Astrocyte of the cerebellum (primary cell): ENCODE measurements at regions of chr7 and their contacts with region 1.

Region 1: GRCh38 chr7:44196450-44196872 is 4.3 kb upstream of the YKT6 start:
- DNase-seq: peak; percentile 24
- H3K4me3 ChIP-seq: no peak overlapping the region
- CTCF ChIP-seq: peak; percentile 91

Region 2: DNA sequence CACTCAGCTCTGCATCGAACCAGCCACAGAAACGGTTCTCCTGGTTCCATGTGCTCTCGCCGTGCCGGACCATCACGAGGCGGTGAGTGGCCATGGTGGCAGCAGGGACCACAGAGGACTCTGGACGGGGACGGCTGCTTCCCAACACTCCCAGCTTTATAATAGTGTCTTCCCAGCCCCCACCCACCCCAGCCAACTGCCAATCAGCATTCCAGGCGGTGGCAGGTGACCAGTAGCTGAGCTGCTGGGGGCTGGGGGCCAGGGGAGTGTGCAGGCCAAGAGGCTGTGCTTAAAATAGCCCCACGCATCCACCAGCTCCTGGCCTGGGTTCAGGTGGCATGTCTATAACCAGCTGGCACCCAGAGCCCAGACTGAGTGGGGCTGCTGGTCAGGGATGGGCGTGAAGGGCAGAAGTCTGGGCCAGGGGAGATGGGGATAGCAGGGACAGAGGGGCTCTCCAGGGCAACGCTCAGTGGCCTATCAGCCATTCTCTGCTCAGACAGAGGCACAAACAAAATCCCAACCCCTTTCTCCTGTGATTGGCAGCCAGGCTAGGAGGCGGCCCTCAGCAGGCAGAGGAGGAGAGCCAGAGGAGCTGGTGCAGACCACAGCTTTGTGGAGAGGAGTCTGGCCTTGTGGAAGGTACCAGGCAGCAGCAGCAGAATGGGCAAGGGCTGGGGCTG is 130.9 kb before region 1 on chr7 and contains the start of gene PGAM2:
- in situ Hi-C with region 1: loop called (anchors 10 kb)
- DNase-seq: no peak
- H3K4me3 ChIP-seq: no peak within 1 kb of the TSS
- CTCF ChIP-seq: no peak